ENCODE measurements at regions of chr6 and their contacts with region 1.

Region 1: GRCh38 chr6:135675862-135676261 is 175.6 kb upstream of the PDE7B start:
- DNase-seq: peak; percentile 16
- CTCF ChIP-seq: peak; percentile 37

Region 2: DNA sequence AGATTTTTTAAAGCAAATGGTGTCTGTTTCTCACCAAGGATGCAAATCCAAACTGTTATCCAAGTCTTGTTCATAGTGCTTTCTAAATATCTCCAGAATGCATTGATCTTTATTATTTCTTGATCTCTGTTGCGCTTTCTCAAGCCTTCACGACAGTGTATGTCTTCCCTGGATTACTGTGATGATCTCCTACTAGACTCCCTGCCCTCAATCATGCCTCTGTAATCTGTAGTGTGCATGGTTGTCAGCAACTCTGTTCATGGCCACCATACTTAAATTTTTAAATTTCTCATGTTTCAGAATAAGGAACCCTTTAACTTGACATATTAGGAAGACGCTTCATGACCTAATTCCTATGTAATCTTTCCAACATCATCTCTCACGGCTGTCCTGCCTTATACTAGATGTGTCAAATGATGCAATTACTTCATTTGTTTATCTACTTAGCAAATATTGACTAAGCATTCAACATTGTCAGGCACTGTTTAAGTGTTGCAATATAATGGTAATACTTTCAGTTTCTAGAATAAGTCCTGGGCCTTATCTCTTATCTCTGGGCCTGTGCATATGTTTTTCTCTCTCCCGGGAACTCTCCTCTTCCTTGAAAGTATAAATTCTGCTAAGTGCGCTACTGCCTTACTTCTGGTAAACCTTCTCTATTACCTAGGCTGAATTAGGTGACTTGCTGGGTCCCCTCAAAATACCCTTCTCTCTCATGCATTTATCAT is 152.7 kb before region 1 on chr6:
- in situ Hi-C with region 1: no loop called
- DNase-seq: no peak
- CTCF ChIP-seq: no peak

Region 3: GRCh38 chr6:135535989-135536414 is 139.9 kb before region 1 on chr6:
- in situ Hi-C with region 1: no loop called
- DNase-seq: peak; percentile 24
- CTCF ChIP-seq: peak; percentile 62

Region 4: DNA sequence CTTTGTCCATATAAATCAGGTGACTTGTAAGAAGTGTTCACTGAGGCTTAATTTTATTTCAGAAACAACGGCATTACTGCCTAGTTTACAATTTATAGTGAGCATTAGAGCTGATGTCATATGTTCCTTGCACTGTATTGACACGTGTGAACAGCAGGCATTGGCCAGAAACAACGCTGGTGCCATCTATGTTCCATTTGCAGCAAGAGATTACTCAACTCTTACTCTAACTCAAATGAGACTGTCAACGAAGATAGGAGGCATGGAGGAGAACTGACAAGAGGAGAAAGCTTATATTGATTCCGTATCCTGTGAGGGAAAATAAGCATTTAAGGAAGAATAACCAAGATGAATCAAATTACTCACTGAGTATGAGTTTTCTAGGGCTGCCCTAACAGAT is 525.9 kb after region 1 on chr6:
- in situ Hi-C with region 1: loop called (anchors 25 kb)
- DNase-seq: no peak
- CTCF ChIP-seq: no peak